ENCODE measurements at regions of chr9 and their contacts with region 1.

Region 1: GRCh38 chr9:127450830-127451724 is at the starts of genes LRSAM1 and RPL12:
- DNase-seq: peak; percentile 88
- ATAC-seq: peak; percentile 60
- H3K4me3 ChIP-seq: peak within 1 kb of the TSS; percentile 87 to 98
- H3K27ac ChIP-seq: peak within 1 kb of the TSS; percentile 97
- H3K4me1 ChIP-seq: peaks cover 11 to 52% of the 10 kb centered on the region in 2 experiments
- H3K27me3 ChIP-seq: no peaks in the 10 kb centered on the region
- CTCF ChIP-seq: no peak
- POLR2A ChIP-seq: peak; percentile 99
- RAD21 ChIP-seq: no peak
- total RNA-seq, gene LRSAM1: 25.9 TPM
- total RNA-seq, gene RPL12: 2,679 TPM

Region 2: DNA sequence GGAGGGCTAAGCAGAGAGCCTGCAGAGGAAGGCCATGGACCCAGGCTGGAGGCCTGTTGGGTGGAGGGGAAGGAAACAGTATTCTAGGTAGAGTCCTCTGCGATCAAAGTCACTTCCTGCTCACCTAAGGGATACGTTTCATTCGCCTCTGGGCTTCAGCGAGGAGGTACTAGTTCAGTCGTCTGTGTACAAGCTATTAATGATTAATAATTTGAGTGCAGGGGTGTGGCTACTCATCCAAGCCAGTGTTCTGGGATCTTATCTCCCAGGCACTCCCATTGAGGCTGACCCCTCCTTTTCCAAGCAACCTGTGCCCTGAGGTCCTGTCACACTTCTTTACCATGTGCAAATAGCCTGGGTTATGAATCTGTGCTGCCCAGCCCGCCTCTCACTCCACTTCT is 511.3 kb before region 1 on chr9:
- CTCF ChIA-PET with region 1: interaction called, 6 read pairs
- POLR2A ChIA-PET with region 1: no interaction called
- RAD21 ChIA-PET with region 1: no interaction called
- intact Hi-C with region 1: loop called (anchors 1 kb)
- DNase-seq: no peak
- ATAC-seq: no peak
- H3K4me3 ChIP-seq: no peak overlapping the region
- H3K27ac ChIP-seq: no peak overlapping the region
- H3K4me1 ChIP-seq: no peaks in the 10 kb centered on the region
- H3K27me3 ChIP-seq: no peaks in the 10 kb centered on the region
- CTCF ChIP-seq: no peak
- POLR2A ChIP-seq: no peak
- RAD21 ChIP-seq: no peak

Region 3: GRCh38 chr9:127205183-127205470 is 245.9 kb before region 1 on chr9:
- CTCF ChIA-PET with region 1: interaction called, 10 read pairs
- POLR2A ChIA-PET with region 1: interaction called, 4 read pairs
- RAD21 ChIA-PET with region 1: interaction called in 1 of 2 experiments, 4 read pairs
- intact Hi-C with region 1: no loop called
- DNase-seq: no peak
- ATAC-seq: peak; percentile 93
- H3K4me3 ChIP-seq: no peak overlapping the region
- H3K27ac ChIP-seq: no peak overlapping the region
- H3K4me1 ChIP-seq: peaks cover 8 to 22% of the 10 kb centered on the region in 2 experiments
- H3K27me3 ChIP-seq: no peaks in the 10 kb centered on the region
- CTCF ChIP-seq: peak; percentile 44 to 67 (median 61)
- POLR2A ChIP-seq: no peak
- RAD21 ChIP-seq: peak; percentile 76

Region 4: DNA sequence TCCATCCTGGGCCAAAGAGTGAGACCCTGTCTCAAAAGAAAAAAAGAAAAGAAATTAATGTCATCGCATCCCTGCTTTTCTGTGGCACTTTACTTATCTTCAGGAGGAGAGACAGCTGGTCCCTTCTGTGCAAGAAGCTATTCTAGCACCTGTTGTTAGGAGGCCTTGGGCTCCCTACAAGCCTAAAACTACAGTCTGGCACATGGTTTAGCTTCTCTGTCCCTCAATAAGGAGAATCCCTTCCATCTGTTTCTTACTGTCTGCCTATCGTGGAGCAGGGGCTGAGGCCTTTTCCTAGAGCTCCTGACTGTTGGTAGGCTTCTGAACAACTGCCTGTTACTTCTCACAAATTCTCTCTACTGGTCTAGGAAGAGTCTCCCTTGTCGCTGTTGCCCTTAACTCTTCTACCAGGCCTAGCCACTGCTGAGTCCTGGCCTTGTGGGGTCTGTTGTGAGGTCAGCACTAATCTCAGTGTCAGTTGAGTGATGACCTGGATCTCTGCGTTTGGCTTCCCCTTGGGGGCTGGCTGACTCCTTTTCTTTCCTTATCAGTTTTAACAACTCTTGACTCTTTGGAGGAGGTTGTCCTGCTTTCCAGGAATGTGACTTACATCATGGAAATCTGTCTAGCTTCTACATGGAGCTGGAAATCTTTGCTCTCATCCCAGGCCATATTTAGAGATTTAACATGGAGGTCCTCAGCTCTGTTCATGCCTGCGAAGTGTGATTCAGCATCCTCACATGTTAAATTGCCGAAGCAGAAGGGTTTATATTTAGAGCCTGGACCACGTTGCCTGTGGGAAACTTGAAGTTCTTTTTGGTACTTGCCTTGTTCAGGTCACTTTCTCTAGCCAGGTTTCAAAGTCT is 192.2 kb before region 1 on chr9:
- CTCF ChIA-PET with region 1: no interaction called
- POLR2A ChIA-PET with region 1: no interaction called
- RAD21 ChIA-PET with region 1: no interaction called
- intact Hi-C with region 1: no loop called
- DNase-seq: no peak
- ATAC-seq: no peak
- H3K4me3 ChIP-seq: no peak overlapping the region
- H3K27ac ChIP-seq: no peak overlapping the region
- H3K4me1 ChIP-seq: no peaks in the 10 kb centered on the region
- H3K27me3 ChIP-seq: no peaks in the 10 kb centered on the region
- CTCF ChIP-seq: no peak
- POLR2A ChIP-seq: no peak
- RAD21 ChIP-seq: no peak

Region 5: GRCh38 chr9:127489471-127490115 is 38.5 kb after region 1 on chr9:
- CTCF ChIA-PET with region 1: no interaction called
- POLR2A ChIA-PET with region 1: no interaction called
- RAD21 ChIA-PET with region 1: no interaction called
- intact Hi-C with region 1: no loop called
- DNase-seq: no peak
- ATAC-seq: peak; percentile 46; the same call in 1 of the 2 replicates
- H3K4me3 ChIP-seq: no peak overlapping the region
- H3K27ac ChIP-seq: no peak overlapping the region
- H3K4me1 ChIP-seq: no peaks in the 10 kb centered on the region
- H3K27me3 ChIP-seq: no peaks in the 10 kb centered on the region
- CTCF ChIP-seq: no peak
- POLR2A ChIP-seq: no peak
- RAD21 ChIP-seq: no peak